ENCODE measurements at regions of chr10 and their contacts with region 1.

Region 1: DNA sequence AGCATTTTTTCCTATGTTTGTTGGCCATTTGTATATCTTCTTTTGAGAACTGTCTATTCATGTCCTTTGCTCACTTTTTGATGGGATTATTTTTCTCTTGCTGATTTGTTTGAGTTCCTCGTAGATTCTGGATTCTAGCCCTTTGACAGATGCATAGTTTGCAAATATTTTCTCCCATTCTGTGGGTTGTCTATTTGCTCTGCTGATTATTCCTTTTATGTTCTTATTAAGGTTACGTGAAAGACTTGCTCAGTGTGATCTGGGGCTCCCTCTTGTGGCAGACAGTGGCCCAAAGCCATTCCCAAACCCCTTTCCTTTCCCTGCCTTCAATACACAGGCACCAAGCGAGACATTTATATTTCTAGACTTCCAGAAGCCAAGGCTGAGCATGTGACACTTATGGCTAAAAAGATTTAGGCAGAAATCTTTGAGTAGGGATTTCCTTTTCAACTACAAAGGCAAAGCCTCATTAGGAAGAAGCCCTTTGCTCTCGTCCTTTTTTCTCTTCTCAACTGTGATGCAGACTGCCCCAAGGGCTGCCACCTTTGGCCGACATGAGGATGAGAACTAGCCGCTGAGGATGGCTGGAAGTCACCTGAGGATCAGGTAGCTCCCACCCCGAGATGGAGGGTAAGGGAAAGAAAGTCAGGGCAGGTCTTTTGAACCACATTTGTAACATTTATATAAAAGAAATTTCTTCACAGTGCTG is 23.6 kb downstream of the ST8SIA6 start:
- DNase-seq: peak; percentile 54 to 68 (median 63)
- H3K4me3 ChIP-seq: no peak overlapping the region
- H3K4me3 Mint-ChIP-seq: peak overlapping the region in 6 of 8 donors; percentile 39 to 79 (median 66)
- H3K27ac ChIP-seq: no peak overlapping the region
- H3K27ac Mint-ChIP-seq: peak overlapping the region; percentile 24 to 95 (median 50)
- H3K4me1 ChIP-seq: peaks cover 52% of the 10 kb centered on the region
- H3K4me1 Mint-ChIP-seq: peaks cover 45 to 53% (median 50%) of the 10 kb centered on the region in 4 donors
- H3K27me3 ChIP-seq: no peaks in the 10 kb centered on the region
- H3K27me3 Mint-ChIP-seq: peaks cover 0 to 1% of the 10 kb centered on the region in 2 donors

Region 2: DNA sequence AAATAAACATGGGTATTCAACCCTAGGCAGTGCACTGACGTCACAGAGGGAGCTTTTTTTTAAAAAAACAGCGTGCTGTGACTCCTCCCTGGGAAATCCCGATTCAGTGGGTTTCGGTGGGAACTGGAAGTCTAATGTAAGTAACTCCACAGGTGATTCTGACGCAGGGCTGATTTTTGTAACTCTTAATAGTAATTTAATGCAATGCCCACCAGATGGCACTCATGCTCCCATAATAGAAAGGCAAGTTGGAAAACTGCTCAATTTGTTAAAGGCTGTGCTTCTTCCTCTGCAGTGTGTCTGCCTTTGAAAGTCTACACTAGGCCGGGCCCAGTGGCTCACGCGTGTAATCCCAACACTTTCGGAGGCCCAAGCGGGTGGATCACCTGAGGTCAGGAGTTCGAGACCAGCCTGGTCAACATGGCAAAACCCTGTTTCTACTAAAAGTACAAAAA is 602.7 kb before region 1 on chr10:
- CTCF ChIA-PET with region 1: interaction called, 5 read pairs
- POLR2A ChIA-PET with region 1: no interaction called
- intact Hi-C with region 1: loop called (anchors 2 kb)
- DNase-seq: peak; percentile 67 to 73 (median 71)
- H3K4me3 ChIP-seq: no peak overlapping the region
- H3K4me3 Mint-ChIP-seq: no peak overlapping the region
- H3K27ac ChIP-seq: no peak overlapping the region
- H3K27ac Mint-ChIP-seq: peak overlapping the region in 5 of 7 donors; percentile 15 to 88 (median 68)
- H3K4me1 ChIP-seq: no peaks in the 10 kb centered on the region
- H3K4me1 Mint-ChIP-seq: peaks cover 2 to 6% (median 5%) of the 10 kb centered on the region in 4 donors
- H3K27me3 ChIP-seq: no peaks in the 10 kb centered on the region
- H3K27me3 Mint-ChIP-seq: no peaks in the 10 kb centered on the region

Region 3: DNA sequence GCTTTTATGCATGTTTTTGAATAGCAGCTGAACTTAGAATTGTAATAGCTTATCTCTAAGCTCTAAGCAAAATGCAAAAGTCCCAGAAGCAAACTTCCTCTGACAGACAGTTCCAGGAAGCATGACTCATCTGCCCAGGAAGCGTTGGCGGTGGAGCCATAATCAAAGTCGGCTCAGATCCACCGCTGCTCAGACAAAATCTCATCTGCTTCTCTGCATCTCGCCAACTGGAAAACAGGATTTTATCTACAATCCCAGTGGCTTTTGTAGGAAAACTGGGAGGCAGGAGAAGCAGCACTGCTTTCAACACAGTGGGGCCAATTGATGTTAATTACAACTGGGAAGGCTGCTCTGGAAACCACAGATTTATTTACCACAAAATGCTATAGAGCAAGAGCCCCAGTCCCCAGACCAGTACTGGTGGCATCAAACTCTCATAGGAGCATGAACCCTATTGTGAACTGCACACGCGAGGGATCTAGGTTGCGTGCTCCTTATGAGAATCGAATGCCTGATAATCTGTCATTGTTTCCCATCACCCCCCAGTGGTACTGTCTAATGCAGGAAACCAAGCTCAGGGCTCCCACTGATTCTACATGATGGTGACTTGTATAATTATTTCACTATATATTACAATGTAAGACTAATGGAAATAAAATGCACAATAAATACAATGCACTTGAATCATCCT is 401.1 kb before region 1 on chr10:
- CTCF ChIA-PET with region 1: no interaction called
- POLR2A ChIA-PET with region 1: no interaction called
- intact Hi-C with region 1: loop called (anchors 5 kb)
- DNase-seq: peak; percentile 65 to 90 (median 68)
- H3K4me3 ChIP-seq: peak overlapping the region in 1 of 2 donors; percentile 51
- H3K4me3 Mint-ChIP-seq: peak overlapping the region; percentile 81 to 86 (median 84)
- H3K27ac ChIP-seq: peak overlapping the region; percentile 90
- H3K27ac Mint-ChIP-seq: peak overlapping the region; percentile 95 to 97 (median 97)
- H3K4me1 ChIP-seq: peaks cover 90% of the 10 kb centered on the region
- H3K4me1 Mint-ChIP-seq: peaks cover 55 to 94% (median 77%) of the 10 kb centered on the region in 4 donors
- H3K27me3 ChIP-seq: no peaks in the 10 kb centered on the region
- H3K27me3 Mint-ChIP-seq: no peaks in the 10 kb centered on the region

Region 4: GRCh38 chr10:17056781-17057428 is 373.9 kb before region 1 on chr10:
- CTCF ChIA-PET with region 1: no interaction called
- POLR2A ChIA-PET with region 1: no interaction called
- intact Hi-C with region 1: no loop called
- DNase-seq: no peak
- H3K4me3 ChIP-seq: no peak overlapping the region
- H3K4me3 Mint-ChIP-seq: no peak overlapping the region
- H3K27ac ChIP-seq: no peak overlapping the region
- H3K27ac Mint-ChIP-seq: no peak overlapping the region
- H3K4me1 ChIP-seq: no peaks in the 10 kb centered on the region
- H3K4me1 Mint-ChIP-seq: peaks cover 0 to 10% (median 4%) of the 10 kb centered on the region in 4 donors
- H3K27me3 ChIP-seq: no peaks in the 10 kb centered on the region
- H3K27me3 Mint-ChIP-seq: no peaks in the 10 kb centered on the region

Region 5: DNA sequence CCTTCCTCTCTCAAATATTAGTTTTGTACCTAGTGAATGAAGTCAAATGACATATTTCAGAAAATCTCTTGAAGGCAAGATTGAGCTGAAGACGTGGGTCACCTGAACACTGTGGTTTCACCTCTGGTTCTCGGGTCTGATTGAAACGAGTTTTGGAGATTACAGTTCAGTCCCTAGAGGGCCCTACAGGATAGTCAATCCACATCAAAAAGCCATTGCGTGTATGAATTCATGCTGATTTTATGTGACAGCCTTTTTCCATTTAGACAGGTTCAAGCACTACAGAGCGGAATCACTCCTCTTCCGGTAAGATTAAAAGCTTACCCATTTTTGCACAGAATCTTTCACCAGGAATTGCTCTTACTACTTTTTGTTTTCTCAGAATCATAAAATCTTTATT is 140.6 kb before region 1 on chr10:
- CTCF ChIA-PET with region 1: interaction called, 5 read pairs
- POLR2A ChIA-PET with region 1: no interaction called
- intact Hi-C with region 1: loop called (anchors 1 kb)
- DNase-seq: peak in 4 of 5 donors; percentile 1 to 23 (median 9)
- H3K4me3 ChIP-seq: no peak overlapping the region
- H3K4me3 Mint-ChIP-seq: no peak overlapping the region
- H3K27ac ChIP-seq: no peak overlapping the region
- H3K27ac Mint-ChIP-seq: no peak overlapping the region
- H3K4me1 ChIP-seq: no peaks in the 10 kb centered on the region
- H3K4me1 Mint-ChIP-seq: peaks cover 0 to 5% (median 0%) of the 10 kb centered on the region in 4 donors
- H3K27me3 ChIP-seq: peaks cover 3% of the 10 kb centered on the region
- H3K27me3 Mint-ChIP-seq: peaks cover 18 to 31% of the 10 kb centered on the region in 2 donors

Region 6: GRCh38 chr10:17418249-17418648 is 12.6 kb before region 1 on chr10:
- CTCF ChIA-PET with region 1: interaction called, 467 read pairs
- POLR2A ChIA-PET with region 1: interaction called, 26 read pairs
- intact Hi-C with region 1: no loop called
- DNase-seq: no peak
- H3K4me3 ChIP-seq: no peak overlapping the region
- H3K4me3 Mint-ChIP-seq: no peak overlapping the region
- H3K27ac ChIP-seq: no peak overlapping the region
- H3K27ac Mint-ChIP-seq: no peak overlapping the region
- H3K4me1 ChIP-seq: peaks cover 7% of the 10 kb centered on the region
- H3K4me1 Mint-ChIP-seq: peaks cover 17 to 37% (median 24%) of the 10 kb centered on the region in 4 donors
- H3K27me3 ChIP-seq: no peaks in the 10 kb centered on the region
- H3K27me3 Mint-ChIP-seq: peaks cover 1 to 4% of the 10 kb centered on the region in 2 donors

Region 7: DNA sequence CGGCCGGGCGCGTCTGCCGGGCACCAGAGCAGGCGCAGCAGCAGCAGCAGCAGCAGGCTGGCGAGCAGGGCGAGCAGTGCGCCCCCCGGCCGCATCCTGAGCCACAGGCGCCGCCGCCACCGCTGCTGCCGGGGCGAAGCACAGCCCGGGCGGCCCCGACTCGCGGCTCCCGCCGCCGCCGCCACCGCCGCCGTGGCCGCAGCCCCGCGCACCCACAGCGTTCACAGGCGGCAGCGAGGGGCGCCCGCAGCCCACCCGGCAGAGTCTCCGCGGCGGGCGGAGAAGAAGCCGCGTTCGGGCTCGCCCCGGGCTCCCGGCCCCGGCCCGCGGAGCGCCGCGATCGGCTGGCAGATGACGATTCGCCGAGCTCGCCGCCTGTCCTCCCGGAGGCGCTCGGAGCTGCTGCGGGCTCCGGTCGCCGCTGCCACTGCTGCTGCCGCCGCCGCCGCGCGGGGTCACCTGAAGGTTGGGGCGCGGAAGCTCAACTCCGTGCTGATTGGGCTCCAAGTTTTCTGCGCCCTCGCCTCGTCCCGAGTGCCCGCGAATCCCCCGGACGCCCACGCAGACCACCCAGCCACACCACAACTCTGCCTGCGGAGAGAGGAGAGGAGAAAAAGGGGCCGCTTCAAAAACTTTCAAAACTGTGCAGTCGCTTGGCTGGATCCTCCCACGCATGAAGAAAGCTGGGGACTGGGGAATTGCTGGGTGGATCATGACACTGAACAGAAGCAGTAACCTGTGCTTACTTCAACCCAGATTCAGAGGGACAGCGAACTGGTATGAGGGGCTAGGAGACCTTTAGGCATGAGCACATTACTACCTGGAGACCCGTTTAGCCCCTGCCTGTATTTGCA is 23.6 kb after region 1 on chr10 and contains the start of gene ST8SIA6:
- CTCF ChIA-PET with region 1: interaction called, 13 read pairs
- POLR2A ChIA-PET with region 1: interaction called, 6 read pairs
- intact Hi-C with region 1: loop called (anchors 1 kb)
- DNase-seq: peak in 4 of 5 donors; percentile 41 to 59 (median 54)
- H3K4me3 ChIP-seq: peak within 1 kb of the TSS; percentile 27 to 56
- H3K4me3 Mint-ChIP-seq: peak within 1 kb of the TSS; percentile 87 to 95 (median 90)
- H3K27ac ChIP-seq: no peak within 1 kb of the TSS
- H3K27ac Mint-ChIP-seq: peak within 1 kb of the TSS in 6 of 7 donors; percentile 46 to 81 (median 71)
- H3K4me1 ChIP-seq: peaks cover 9% of the 10 kb centered on the region
- H3K4me1 Mint-ChIP-seq: peaks cover 13 to 34% (median 17%) of the 10 kb centered on the region in 4 donors
- H3K27me3 ChIP-seq: no peaks in the 10 kb centered on the region
- H3K27me3 Mint-ChIP-seq: peaks cover 1 to 2% of the 10 kb centered on the region in 2 donors
- total RNA-seq, gene ST8SIA6: 0.52 to 0.58 TPM